A673 (cell line): ENCODE measurements at regions of chr12 and their contacts with region 1.

Region 1: GRCh38 chr12:63978519-63978918 is 134.0 kb downstream of the SRGAP1 start:
- DNase-seq: peak; percentile 19
- H3K4me3 ChIP-seq: no peak overlapping the region
- H3K27ac ChIP-seq: no peak overlapping the region
- H3K4me1 ChIP-seq: peaks cover 28% of the 10 kb centered on the region
- H3K27me3 ChIP-seq: no peaks in the 10 kb centered on the region
- CTCF ChIP-seq: no peak

Region 2: DNA sequence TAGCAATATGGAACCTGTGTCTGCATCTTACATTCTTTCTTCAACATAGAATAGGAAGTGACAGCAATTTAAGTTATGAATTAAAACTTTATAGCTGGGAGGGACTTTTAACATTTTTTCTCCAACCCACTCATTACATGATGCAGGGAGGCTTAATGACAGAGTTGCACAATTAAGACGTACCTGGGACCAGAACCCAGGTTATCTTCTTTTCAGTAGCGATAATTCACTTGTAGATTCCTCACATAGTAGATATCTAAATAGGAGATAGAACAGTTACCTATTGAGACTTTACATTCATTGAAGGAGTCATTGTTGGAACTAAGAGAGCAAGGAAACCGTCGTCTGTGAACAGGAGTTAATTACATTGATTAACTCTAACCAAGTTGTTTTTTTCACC is 128.9 kb before region 1 on chr12:
- CTCF ChIA-PET with region 1: no interaction called
- POLR2A ChIA-PET with region 1: interaction called, 10 read pairs
- intact Hi-C with region 1: loop called (anchors 10 kb)
- DNase-seq: no peak
- H3K4me3 ChIP-seq: no peak overlapping the region
- H3K27ac ChIP-seq: no peak overlapping the region
- H3K4me1 ChIP-seq: peaks cover 11% of the 10 kb centered on the region
- H3K27me3 ChIP-seq: no peaks in the 10 kb centered on the region
- CTCF ChIP-seq: no peak

Region 3: DNA sequence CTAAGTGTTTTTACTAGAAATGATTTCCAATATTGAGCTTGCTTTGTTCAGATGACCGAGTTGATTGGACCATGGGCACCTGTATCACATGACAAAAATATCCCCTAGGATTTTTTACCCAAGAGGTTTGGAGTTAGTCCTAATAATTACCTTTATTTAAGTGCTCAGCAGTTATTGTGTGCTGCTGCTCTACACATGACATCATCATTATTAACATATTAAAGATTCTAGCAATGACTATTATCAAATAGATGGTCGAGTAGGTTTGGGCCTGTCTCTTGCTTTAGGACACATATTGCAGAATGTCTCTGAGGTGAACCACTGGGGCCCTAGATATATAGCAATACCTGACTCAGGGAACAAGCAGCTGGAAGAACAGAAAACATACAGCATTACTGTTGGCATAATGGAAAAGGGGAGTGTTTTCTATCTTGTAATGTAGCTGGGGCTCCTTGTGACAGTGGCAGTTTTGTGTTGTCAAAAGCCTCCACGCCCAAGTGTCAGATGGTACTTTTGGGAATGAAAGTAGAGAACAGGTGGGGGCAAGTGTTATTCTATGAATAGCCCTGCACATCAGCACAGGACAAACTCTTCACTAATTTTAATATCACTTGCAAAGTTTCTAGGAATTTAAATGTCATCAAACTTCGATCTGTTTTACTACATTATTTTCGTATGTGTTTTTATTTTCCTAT is 357.4 kb after region 1 on chr12:
- CTCF ChIA-PET with region 1: no interaction called
- POLR2A ChIA-PET with region 1: no interaction called
- intact Hi-C with region 1: no loop called
- DNase-seq: no peak
- H3K4me3 ChIP-seq: no peak overlapping the region
- H3K27ac ChIP-seq: no peak overlapping the region
- H3K4me1 ChIP-seq: no peaks in the 10 kb centered on the region
- H3K27me3 ChIP-seq: no peaks in the 10 kb centered on the region
- CTCF ChIP-seq: no peak